Ascending aorta (tissue), 2 donors: ENCODE measurements at regions of chr1 and their contacts with region 1.

Region 1: GRCh38 chr1:244272471-244273261 is 179.0 kb downstream of the ADSS2 start:
- DNase-seq: peak in 1 of 2 donors; percentile 81
- H3K4me3 ChIP-seq: no peak overlapping the region
- H3K27ac ChIP-seq: peak overlapping the region; percentile 3 to 54
- H3K4me1 ChIP-seq: peaks cover 0 to 3% of the 10 kb centered on the region in 2 donors
- H3K27me3 ChIP-seq: no peaks in the 10 kb centered on the region
- CTCF ChIP-seq: peak; percentile 87 to 93 (median 91)

Region 2: DNA sequence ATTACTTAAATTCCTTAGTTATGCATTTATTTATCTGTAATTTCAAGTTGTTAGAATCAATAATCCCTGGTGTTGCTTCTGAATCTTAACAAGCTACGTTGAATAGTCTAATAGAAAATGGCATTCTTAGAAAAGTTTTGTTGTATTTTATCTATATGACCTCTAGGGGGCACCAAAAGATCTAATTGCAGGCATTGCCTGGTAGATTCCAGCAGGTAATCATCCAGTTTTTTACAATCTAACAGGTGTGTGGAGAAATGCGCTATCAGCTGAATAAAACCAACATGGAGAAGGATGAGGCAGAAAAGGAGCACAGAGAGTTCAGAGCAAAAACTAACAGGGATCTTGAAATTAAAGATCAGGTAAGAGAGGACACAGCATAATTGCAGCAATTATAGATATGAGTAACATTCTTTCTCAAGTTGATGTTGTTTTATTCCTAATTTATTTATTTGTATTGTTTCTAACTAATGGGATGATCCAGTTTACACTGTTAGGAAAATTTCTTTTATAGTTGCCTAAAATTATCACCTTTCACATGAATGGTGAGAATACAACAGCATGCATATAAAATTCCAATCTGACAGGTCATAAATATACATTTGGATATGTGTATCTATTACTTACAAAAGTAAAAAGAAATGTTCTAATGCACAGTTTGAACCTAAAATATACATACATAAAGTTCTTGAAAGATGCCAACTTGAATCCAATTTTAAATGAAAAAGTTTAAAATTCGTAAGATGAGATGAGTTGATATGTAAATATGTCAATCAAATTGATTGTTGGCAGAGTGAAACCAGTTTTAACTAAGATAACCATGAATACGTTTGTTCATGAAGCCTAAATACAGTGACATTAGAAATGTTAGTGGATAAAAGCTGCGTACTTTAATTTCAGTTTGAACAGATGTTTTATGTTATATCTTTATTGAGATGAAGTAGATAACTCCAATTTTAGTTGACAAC is 928.4 kb before region 1 on chr1:
- intact Hi-C with region 1: loop called (anchors 1 kb)
- DNase-seq: no peak
- H3K4me3 ChIP-seq: no peak overlapping the region
- H3K27ac ChIP-seq: no peak overlapping the region
- H3K4me1 ChIP-seq: no peaks in the 10 kb centered on the region
- H3K27me3 ChIP-seq: no peaks in the 10 kb centered on the region
- CTCF ChIP-seq: peak; percentile 51 to 75 (median 69)

Region 3: GRCh38 chr1:243708210-243708609 is 564.5 kb before region 1 on chr1:
- intact Hi-C with region 1: loop called (anchors 5 kb)
- DNase-seq: no peak
- H3K4me3 ChIP-seq: no peak overlapping the region
- H3K27ac ChIP-seq: no peak overlapping the region
- H3K4me1 ChIP-seq: peaks cover 4 to 8% of the 10 kb centered on the region in 2 donors
- H3K27me3 ChIP-seq: no peaks in the 10 kb centered on the region
- CTCF ChIP-seq: peak in 2 of 3 experiments; percentile 9 to 30

Region 4: DNA sequence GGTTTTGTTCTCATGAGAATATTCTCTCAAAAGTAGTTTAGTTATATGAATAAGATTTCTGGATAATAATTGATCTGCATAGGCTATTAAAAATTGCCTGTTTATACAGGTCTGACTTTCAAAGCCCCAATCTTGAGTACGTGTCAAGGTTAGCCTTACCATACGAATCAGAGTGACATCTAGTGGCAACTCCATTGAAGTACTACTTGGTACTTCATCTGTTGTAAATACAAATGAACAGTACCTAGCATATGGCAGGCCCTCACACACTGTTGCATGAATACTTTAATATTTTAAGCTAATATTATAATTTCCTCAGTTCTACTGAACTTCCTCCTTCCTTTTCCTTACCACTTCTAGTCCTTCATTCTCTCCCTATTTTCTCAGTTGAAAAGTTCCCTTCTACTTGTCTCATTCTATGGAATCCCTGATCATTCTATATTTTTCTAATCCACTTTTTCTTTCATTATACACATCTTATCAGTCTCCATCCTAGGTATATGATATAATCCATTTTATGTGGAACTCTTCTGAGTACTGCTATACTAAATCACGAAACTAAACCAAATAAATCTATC is 523.9 kb before region 1 on chr1:
- intact Hi-C with region 1: loop called (anchors 5 kb)
- DNase-seq: no peak
- H3K4me3 ChIP-seq: no peak overlapping the region
- H3K27ac ChIP-seq: no peak overlapping the region
- H3K4me1 ChIP-seq: peaks cover 0 to 14% of the 10 kb centered on the region in 2 donors
- H3K27me3 ChIP-seq: no peaks in the 10 kb centered on the region
- CTCF ChIP-seq: peak; percentile 48 to 81 (median 80)